Cardiac septum (tissue), 1 donor: ENCODE measurements at regions of chr13 and their contacts with region 1.

Region 1: DNA sequence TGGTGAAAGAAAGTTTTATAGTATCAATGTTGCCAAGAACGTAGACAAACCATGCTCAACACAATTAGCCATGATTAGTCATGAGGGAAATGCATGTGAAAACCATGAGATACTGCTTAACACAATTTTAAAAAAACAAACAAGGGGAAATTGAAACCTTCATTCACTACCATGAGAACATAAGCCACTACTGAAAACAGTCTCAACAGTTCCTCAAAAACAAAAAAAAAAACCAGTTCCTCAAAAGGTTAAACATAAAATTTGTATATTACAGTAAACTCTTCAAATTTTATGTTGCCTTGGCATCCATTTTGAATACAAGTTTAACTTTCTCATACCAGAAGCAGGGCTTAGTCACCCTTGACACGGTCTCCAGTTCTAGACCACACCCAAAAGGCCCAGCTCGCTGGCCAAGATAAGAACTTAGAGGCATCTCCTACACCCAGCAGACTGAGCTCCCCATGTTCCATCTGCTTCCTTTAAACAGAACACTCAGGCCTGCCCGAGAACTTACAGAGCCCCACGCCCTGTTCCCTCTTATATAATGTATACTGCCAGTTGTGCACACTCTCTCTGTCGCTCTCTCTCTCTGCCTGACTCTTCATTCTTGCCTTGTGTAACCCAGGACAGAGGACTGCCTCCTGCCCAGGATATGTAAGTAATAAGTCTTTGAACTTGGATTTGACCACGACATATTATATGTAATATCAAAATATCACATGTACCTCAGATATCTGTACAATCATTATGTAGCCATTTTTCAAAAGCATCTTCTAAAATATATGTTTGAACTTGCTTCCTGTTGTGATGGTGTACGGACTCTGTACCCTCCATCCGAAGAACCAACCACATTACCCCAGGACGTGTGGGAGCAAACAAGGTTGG is 67.4 kb downstream of the STK24 start:
- DNase-seq: no peak

Region 2: DNA sequence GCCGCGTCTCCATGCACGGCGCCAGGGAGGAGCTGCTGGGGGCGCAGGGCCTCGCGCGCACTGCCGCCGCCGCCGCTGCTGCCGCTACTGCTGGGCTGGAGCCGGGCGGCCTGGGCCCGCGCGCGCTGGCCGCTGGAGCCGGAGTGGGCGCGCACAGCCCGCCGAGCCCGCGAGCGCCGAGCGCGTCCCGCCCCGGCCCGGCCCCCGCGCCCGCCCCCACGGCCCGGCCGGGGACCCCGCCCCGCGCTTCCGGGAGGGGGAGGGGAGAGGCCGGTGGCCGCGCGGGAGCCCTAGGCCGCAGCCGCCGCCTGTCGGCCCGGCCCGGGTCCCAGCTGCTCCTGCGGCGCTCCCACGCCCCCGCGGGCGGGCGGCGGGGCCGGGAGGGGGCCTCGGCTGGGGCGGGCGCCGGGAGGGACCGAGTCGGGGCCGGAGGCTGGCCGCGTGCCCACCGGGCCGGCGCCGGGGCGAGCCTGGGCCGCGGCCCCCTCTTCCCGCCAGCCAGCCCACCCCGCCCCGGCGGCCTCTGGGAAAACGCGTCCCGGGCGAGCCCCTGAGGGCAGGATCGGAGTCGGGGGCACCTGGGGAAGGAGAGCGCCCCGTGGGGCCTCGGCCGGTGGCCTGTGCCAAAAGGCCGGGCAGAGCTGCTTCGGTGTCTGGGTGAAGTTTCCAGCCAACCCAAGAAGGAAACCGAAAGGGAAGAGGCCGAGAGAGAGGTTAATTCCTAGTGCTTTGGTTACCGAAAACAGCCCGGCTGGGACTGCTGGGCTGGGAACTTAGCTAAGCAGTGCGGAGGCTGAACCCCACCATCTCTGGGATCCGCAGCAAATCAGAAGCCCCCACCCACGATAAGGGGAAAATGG is 67.7 kb after region 1 on chr13 and contains the start of gene STK24:
- intact Hi-C with region 1: loop called (anchors 2 kb)
- DNase-seq: peak; percentile 85
- total RNA-seq, gene STK24: 63.5 TPM

Region 3: DNA sequence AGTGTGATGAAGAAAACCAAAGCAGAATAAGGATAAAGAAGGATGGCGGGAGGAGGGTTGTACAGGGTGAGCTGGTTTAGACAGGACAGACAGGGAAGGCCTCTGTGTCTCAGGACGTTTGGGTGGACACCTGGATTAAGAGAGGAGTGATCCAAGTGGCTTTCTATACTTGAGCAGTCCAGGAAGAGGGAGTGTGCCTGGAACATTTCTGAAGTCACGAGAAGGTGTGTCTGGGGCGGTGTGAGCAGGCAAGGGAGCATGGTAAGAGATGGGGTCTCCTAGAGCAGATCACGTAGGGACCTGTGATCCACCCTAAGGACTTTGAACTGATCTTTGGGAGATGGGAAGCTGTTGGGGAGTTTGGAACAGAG is 82.8 kb after region 1 on chr13:
- intact Hi-C with region 1: no loop called
- DNase-seq: no peak

Region 4: GRCh38 chr13:99417201-99418102 is 907.9 kb after region 1 on chr13:
- intact Hi-C with region 1: no loop called
- DNase-seq: peak; percentile 39